ENCODE measurements at regions of chr11 and their contacts with region 1.

Region 1: GRCh38 chr11:74748211-74749127 is at the start of gene RNF169:
- DNase-seq: peak; percentile 96
- ATAC-seq: peak; percentile 98
- H3K4me3 ChIP-seq: peak within 1 kb of the TSS; percentile 53 to 81 (median 73)
- H3K4me3 Mint-ChIP-seq: peak within 1 kb of the TSS; percentile 93
- H3K27ac ChIP-seq: peak within 1 kb of the TSS; percentile 87 to 90
- H3K27ac Mint-ChIP-seq: peak within 1 kb of the TSS; percentile 98
- H3K4me1 ChIP-seq: peaks cover 19 to 24% of the 10 kb centered on the region in 2 donors
- H3K4me1 Mint-ChIP-seq: peaks cover 34% of the 10 kb centered on the region
- H3K27me3 ChIP-seq: no peaks in the 10 kb centered on the region
- H3K27me3 Mint-ChIP-seq: no peaks in the 10 kb centered on the region
- CTCF ChIP-seq: no peak
- total RNA-seq, gene RNF169: 27.3 and 28.4 TPM in 2 replicates

Region 2: GRCh38 chr11:74170694-74171629 is 577.5 kb before region 1 on chr11 and contains the starts of genes C2CD3 and PPME1:
- CTCF ChIA-PET with region 1: no interaction called
- POLR2A ChIA-PET with region 1: no interaction called
- intact Hi-C with region 1: loop called (anchors 5 kb)
- DNase-seq: peak; percentile 99
- ATAC-seq: peak; percentile 94
- H3K4me3 ChIP-seq: peak within 1 kb of the TSS; percentile 82 to 95 (median 85)
- H3K4me3 Mint-ChIP-seq: no peak within 1 kb of the TSS
- H3K27ac ChIP-seq: peak within 1 kb of the TSS; percentile 73 to 80
- H3K27ac Mint-ChIP-seq: no peak within 1 kb of the TSS
- H3K4me1 ChIP-seq: peaks cover 22 to 26% of the 10 kb centered on the region in 2 donors
- H3K4me1 Mint-ChIP-seq: peaks cover 6% of the 10 kb centered on the region
- H3K27me3 ChIP-seq: no peaks in the 10 kb centered on the region
- H3K27me3 Mint-ChIP-seq: no peaks in the 10 kb centered on the region
- CTCF ChIP-seq: peak; percentile 11
- total RNA-seq, gene C2CD3: 63.9 and 69.0 TPM in 2 replicates
- total RNA-seq, gene PPME1: 18.7 and 23.6 TPM in 2 replicates

Region 3: GRCh38 chr11:74783241-74783871 is 34.9 kb after region 1 on chr11:
- CTCF ChIA-PET with region 1: interaction called, 3 read pairs
- POLR2A ChIA-PET with region 1: no interaction called
- intact Hi-C with region 1: loop called (anchors 1 kb)
- DNase-seq: peak; percentile 85
- ATAC-seq: peak; percentile 94
- H3K4me3 ChIP-seq: peak overlapping the region in 2 of 5 experiments; percentile 13 to 47
- H3K4me3 Mint-ChIP-seq: peak overlapping the region; percentile 42
- H3K27ac ChIP-seq: peak overlapping the region; percentile 3 to 11
- H3K27ac Mint-ChIP-seq: peak overlapping the region; percentile 24
- H3K4me1 ChIP-seq: peaks cover 29 to 37% of the 10 kb centered on the region in 2 donors
- H3K4me1 Mint-ChIP-seq: peaks cover 33% of the 10 kb centered on the region
- H3K27me3 ChIP-seq: no peaks in the 10 kb centered on the region
- H3K27me3 Mint-ChIP-seq: no peaks in the 10 kb centered on the region
- CTCF ChIP-seq: no peak

Region 4: GRCh38 chr11:74948898-74949747 is 200.7 kb after region 1 on chr11 and contains the starts of genes SPCS2 and XRRA1:
- CTCF ChIA-PET with region 1: no interaction called
- POLR2A ChIA-PET with region 1: no interaction called
- intact Hi-C with region 1: loop called (anchors 1 kb)
- DNase-seq: peak; percentile 98
- ATAC-seq: peak; percentile 96
- H3K4me3 ChIP-seq: peak within 1 kb of the TSS; percentile 71 to 98 (median 84)
- H3K4me3 Mint-ChIP-seq: peak within 1 kb of the TSS; percentile 94
- H3K27ac ChIP-seq: peak within 1 kb of the TSS; percentile 85 to 95
- H3K27ac Mint-ChIP-seq: peak within 1 kb of the TSS; percentile 96
- H3K4me1 ChIP-seq: peaks cover 43 to 50% of the 10 kb centered on the region in 2 donors
- H3K4me1 Mint-ChIP-seq: peaks cover 62% of the 10 kb centered on the region
- H3K27me3 ChIP-seq: no peaks in the 10 kb centered on the region
- H3K27me3 Mint-ChIP-seq: no peaks in the 10 kb centered on the region
- CTCF ChIP-seq: no peak
- total RNA-seq, gene SPCS2: 98.5 and 106 TPM in 2 replicates
- total RNA-seq, gene XRRA1: 80.8 and 81.9 TPM in 2 replicates

Measured in B cell (primary cell).